HepG2 (cell line): ENCODE measurements at regions of chr11 and their contacts with region 1.

Region 1: DNA sequence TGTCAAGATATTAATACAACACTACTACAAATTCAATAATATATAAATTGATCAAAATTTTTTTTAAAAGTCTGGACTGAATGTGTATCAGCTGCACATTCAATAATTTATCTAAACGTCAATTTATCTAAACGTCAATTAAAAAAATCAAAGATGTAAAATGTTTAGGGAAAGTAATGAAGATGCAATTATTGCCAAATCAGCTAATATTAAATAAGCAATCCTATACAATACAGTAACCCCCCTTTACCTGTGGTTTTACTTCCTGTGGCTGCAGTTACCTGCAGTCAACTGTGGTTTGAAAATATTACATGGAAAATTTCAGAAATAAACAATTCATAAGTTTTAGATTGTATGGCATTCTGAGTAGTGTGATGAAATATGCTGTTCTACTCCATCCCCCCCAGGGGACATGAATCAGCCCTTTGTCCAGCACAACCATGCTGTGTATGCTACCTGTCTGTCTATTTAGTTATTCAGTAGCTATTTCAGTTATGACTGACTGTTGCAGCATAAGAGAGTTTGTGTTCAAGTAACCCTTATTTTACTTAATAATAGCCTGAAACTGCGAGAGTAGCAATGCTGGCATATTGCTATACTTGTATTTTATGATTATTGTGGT is 72.2 kb downstream of the CWF19L2 start:
- DNase-seq: peak; percentile 88
- ATAC-seq: peak; percentile 100
- H3K4me3 ChIP-seq: no peak overlapping the region; a peak in 1 of 6 replicates
- H3K27ac ChIP-seq: peak overlapping the region; percentile 57
- H3K4me1 ChIP-seq: peaks cover 19% of the 10 kb centered on the region
- H3K27me3 ChIP-seq: no peaks in the 10 kb centered on the region
- CTCF ChIP-seq: no peak
- EP300 ChIP-seq: peak in 1 of 2 experiments; percentile 56; a peak in 2 of 4 replicates
- POLR2A ChIP-seq: no peak
- RAD21 ChIP-seq: no peak

Region 2: DNA sequence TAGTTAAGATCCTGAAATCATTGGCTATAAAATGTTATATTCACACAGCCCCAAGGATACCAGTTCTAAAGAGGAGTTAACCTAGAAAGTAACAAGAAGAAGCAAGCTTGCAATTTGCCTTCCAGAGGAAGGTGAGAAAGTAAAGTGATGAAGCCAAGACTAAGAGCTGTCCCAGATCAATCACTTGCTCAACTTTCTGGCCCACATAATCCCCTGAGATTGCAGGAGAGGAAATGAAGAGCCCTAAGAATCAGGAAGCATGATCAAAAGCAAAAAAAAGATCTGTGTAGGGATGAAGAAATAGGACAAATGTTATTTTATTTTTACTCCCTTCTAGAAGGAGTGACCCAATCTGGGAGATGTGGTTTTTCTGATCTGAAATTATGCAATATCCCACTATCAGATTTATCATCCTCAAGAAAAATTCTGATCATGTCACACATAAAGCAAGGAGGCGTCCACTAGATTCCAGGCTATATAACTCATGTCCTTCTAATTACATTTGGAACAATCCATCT is 186.9 kb before region 1 on chr11:
- CTCF ChIA-PET with region 1: no interaction called
- POLR2A ChIA-PET with region 1: no interaction called
- in situ Hi-C with region 1: no loop called
- intact Hi-C with region 1: loop called (anchors 5 kb)
- DNase-seq: no peak
- ATAC-seq: no peak
- H3K4me3 ChIP-seq: no peak overlapping the region
- H3K27ac ChIP-seq: no peak overlapping the region
- H3K4me1 ChIP-seq: peaks cover 49% of the 10 kb centered on the region
- H3K27me3 ChIP-seq: no peaks in the 10 kb centered on the region
- CTCF ChIP-seq: no peak
- EP300 ChIP-seq: no peak
- POLR2A ChIP-seq: no peak
- RAD21 ChIP-seq: no peak

Region 3: DNA sequence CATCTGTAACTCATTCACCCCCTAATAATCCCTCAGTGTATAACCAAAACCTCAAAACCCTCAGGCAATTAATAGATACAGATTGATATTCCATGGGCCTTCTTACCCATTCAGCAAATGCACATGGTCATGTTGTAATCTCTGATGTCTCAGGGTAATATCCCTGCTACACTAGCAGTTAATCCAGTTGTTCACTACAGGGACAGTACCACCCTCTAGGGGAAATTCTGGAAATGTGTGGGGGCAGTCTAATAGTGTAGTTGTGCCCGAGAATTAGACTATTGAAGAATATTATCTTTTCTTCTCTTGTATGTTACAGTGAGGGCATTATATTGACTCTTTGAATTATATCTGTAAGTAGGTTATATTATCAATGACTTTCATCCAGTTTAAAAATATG is 103.3 kb before region 1 on chr11:
- CTCF ChIA-PET with region 1: no interaction called
- POLR2A ChIA-PET with region 1: no interaction called
- in situ Hi-C with region 1: no loop called
- intact Hi-C with region 1: no loop called
- DNase-seq: peak; percentile 10
- ATAC-seq: peak; percentile 76
- H3K4me3 ChIP-seq: no peak overlapping the region
- H3K27ac ChIP-seq: no peak overlapping the region
- H3K4me1 ChIP-seq: no peaks in the 10 kb centered on the region
- H3K27me3 ChIP-seq: no peaks in the 10 kb centered on the region
- CTCF ChIP-seq: peak; percentile 33; the same call in 1 of the 2 replicates
- EP300 ChIP-seq: no peak
- POLR2A ChIP-seq: no peak
- RAD21 ChIP-seq: no peak

Region 4: DNA sequence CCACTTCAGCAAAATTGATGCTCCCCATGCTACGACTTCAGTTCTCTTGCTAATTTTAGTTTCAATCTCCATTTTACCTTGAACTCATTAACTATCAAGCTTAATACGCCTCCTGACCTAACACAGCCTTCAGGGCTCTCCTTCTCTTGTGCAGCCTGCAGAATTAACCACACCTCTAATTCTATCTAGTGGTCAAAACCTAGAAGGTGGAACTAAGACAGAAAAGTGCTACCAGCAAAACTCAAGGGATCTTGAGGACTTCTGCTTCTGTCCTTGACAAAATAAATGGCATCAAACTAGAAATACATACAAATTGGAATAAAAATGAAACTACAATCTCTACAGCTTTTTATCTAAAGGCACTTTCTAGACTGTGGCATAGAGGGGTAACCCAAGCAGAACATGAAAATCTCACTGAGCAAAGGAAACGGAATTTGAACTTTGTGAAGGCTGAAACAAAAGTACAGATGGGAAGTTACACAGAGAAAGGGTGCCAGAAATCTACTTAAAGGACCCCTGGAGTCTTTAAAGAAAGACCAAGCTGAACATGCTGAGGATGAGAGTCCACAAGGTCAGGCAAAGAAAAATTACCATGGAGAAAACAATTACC is 61.5 kb after region 1 on chr11:
- CTCF ChIA-PET with region 1: no interaction called
- POLR2A ChIA-PET with region 1: no interaction called
- in situ Hi-C with region 1: no loop called
- intact Hi-C with region 1: no loop called
- DNase-seq: no peak
- ATAC-seq: no peak
- H3K4me3 ChIP-seq: no peak overlapping the region
- H3K27ac ChIP-seq: no peak overlapping the region
- H3K4me1 ChIP-seq: peaks cover 9% of the 10 kb centered on the region
- H3K27me3 ChIP-seq: no peaks in the 10 kb centered on the region
- CTCF ChIP-seq: no peak
- EP300 ChIP-seq: no peak
- POLR2A ChIP-seq: no peak
- RAD21 ChIP-seq: no peak